ENCODE measurements at regions of chr18 and their contacts with region 1.

Region 1: DNA sequence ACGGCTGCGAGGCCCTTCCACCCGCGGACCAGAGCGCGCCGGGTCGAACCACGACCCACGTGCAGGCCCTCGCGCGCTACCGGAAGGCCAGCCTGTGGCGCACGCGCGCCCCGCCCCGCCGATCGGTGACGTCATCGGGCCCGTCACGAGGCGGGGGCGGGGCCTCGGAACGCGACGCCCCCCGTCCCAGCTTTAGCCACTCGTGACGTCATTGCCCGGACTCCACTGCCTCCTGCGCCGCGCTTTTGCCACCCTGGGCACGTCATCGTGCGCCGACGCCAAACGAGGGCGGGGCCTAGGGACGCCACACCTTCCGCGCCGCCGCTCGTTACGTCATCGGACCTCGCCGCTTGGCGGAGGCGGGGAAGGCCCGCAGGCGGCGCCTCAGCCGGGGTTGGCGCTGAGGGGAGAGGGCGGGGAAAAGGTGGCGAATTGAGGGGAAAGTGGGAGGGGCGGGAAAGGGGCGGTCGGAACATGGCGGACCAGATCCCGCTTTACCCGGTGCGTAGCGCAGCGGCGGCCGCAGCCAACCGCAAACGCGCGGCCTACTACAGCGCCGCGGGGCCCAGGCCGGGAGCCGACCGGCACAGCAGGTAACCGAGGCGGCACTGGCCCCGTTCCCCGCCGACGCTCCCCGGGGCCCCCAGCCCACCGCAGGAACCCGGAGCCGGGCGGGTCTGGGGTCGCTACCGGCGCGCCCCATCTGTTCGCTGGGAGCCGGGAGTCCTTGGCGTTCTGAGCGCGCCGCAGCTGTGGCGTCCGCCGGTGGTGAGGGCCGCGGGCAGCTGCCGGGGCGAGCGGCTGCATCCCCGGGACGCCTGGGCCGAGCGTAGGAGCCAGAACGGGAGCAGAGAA is at the start of gene ATP9B:
- DNase-seq: peak; percentile 98
- H3K4me3 Mint-ChIP-seq: peak within 1 kb of the TSS; percentile 91
- H3K27ac Mint-ChIP-seq: peak within 1 kb of the TSS; percentile 97
- H3K4me1 Mint-ChIP-seq: peaks cover 33% of the 10 kb centered on the region
- H3K27me3 Mint-ChIP-seq: peaks cover 3% of the 10 kb centered on the region
- total RNA-seq, gene ATP9B: 18.6 to 19.1 TPM

Region 2: DNA sequence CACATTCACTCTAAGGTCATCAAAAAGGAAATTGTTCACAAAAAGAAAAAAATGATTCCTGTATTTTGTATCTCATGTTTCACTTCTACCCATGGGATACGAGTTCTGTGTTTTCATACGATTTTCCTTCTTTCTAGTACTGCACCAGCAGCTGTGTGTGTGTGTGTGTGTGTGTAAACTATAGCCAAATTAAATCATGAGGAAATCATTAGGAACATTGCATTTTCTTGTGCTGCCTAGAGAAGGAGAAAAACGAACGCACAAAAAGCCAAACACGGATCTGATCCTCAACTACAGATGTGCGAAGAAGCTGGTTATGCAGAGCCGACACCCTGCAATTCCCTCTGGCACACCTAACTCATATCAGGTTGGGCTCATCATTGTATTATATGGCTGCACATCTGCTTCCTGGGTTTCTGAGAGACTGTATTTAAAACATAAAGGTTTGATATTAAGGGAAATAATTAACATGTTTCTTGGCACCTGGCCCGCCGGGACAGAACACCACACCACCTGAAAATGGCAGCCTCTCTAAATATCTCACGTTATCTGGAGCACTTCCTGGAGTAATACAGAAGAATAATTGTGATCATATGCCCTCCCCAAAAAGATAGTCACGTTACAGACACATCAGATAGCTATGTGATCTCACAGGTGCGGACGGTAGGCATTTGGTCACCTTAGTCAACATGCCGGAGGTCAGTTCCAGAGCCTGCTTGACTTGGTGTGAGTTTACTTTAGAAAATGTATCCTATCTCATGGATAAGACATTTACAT is 675.9 kb before region 1 on chr18:
- CTCF ChIA-PET with region 1: no interaction called
- intact Hi-C with region 1: no loop called
- DNase-seq: no peak
- H3K4me3 Mint-ChIP-seq: no peak overlapping the region
- H3K27ac Mint-ChIP-seq: no peak overlapping the region
- H3K4me1 Mint-ChIP-seq: no peaks in the 10 kb centered on the region
- H3K27me3 Mint-ChIP-seq: peaks cover 3% of the 10 kb centered on the region

Region 3: GRCh38 chr18:79200546-79201268 is 131.5 kb after region 1 on chr18:
- CTCF ChIA-PET with region 1: no interaction called
- intact Hi-C with region 1: loop called (anchors 5 kb)
- DNase-seq: no peak
- H3K4me3 Mint-ChIP-seq: no peak overlapping the region
- H3K27ac Mint-ChIP-seq: no peak overlapping the region
- H3K4me1 Mint-ChIP-seq: peaks cover 15% of the 10 kb centered on the region
- H3K27me3 Mint-ChIP-seq: no peaks in the 10 kb centered on the region

Region 4: GRCh38 chr18:79246348-79247108 is 177.4 kb after region 1 on chr18:
- CTCF ChIA-PET with region 1: no interaction called
- intact Hi-C with region 1: loop called (anchors 1 kb)
- DNase-seq: peak; percentile 84
- H3K4me3 Mint-ChIP-seq: no peak overlapping the region
- H3K27ac Mint-ChIP-seq: no peak overlapping the region
- H3K4me1 Mint-ChIP-seq: peaks cover 9% of the 10 kb centered on the region
- H3K27me3 Mint-ChIP-seq: no peaks in the 10 kb centered on the region

Region 5: GRCh38 chr18:79393635-79394533 is 324.7 kb after region 1 on chr18:
- CTCF ChIA-PET with region 1: no interaction called
- intact Hi-C with region 1: loop called (anchors 1 kb)
- DNase-seq: peak; percentile 73
- H3K4me3 Mint-ChIP-seq: peak overlapping the region; percentile 74
- H3K27ac Mint-ChIP-seq: peak overlapping the region; percentile 71
- H3K4me1 Mint-ChIP-seq: peaks cover 34% of the 10 kb centered on the region
- H3K27me3 Mint-ChIP-seq: peaks cover 5% of the 10 kb centered on the region

Region 6: DNA sequence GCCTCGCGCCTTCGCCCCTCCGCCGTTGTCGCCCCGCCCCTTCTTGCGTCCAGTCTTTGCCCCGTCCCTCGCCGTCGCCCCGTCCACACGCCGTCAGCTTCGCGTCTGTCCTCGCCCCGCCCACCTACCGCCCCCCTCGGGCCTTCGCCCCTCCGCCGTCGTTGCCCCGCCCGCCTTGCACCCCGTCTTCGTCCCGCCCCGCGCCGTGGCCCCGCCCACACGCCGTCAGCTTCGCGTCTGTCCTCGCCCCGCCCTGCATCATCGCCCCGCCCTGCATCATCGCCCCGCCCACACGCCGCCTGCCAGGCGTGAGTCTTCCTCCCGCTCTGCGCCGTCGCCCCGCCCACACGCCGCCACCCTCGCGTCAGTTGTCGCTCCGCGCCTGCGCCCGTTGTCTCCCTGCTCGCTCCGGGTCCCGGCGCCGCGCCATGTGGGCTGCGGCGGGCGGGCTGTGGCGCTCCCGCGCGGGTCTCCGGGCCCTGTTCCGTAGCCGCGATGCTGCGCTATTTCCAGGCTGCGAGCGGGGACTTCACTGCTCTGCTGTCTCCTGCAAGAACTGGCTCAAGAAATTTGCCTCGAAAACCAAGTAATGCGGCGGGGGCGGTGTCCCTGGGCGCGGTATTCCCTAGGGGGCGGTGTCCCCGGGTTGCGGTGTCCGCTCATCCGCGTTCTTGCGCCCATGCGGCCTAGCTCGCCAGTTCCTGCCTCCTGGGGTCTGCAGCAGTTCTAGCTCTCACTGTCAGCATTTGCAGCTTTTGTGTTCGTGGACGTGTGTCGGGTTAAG is 965.1 kb after region 1 on chr18 and contains the start of gene RBFA:
- CTCF ChIA-PET with region 1: no interaction called
- intact Hi-C with region 1: loop called (anchors 1 kb)
- DNase-seq: peak; percentile 100
- H3K4me3 Mint-ChIP-seq: peak within 1 kb of the TSS; percentile 82
- H3K27ac Mint-ChIP-seq: peak within 1 kb of the TSS; percentile 73
- H3K4me1 Mint-ChIP-seq: peaks cover 26% of the 10 kb centered on the region
- H3K27me3 Mint-ChIP-seq: no peaks in the 10 kb centered on the region
- total RNA-seq, gene RBFA: 35.7 to 36.0 TPM

Region 7: DNA sequence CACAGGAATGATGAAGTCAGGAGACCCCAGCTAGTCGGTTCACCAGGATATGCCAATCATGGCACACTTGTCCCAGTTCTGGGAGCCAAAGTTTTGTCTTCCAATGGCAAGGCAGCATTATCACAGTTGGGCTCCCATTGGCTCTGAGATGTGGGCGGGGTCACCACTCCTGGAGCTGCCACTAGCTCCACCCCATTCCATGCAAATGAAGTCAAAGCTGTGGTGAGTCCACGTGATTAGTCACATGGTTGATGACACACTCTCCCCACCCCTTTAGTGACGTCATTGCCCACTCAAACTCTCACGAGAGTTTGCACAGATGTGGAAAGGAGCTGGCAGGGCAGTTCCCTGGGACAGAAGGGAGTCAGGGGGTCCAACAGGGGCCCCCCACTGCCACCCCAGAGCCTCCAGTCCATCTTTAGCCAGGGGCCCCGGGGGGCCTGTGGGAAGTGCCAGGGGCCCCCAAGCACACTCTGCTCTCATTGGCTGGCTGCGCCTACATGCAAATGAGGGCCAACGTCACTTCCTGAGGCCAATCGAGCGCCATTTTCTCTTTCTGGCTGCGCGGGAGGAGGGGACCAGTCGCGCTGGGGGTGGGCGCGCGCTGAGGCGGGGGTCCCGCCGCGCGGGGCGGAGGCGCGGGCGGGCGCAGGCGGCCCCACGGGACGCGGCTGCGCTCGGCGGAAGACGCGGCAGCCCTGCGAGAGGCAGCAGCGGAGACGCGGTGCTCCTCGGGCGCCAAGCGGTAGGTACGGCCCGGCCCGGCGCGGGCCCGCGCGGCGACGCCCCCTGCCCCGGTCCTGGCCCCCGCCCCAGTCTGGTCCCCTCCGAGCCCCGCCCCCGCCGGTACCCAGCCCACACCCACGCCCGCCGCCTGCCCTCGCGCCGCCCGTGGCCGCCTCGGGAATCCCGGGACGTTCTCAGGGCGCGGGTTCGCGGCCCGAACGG is 1039.8 kb after region 1 on chr18 and contains the start of gene ADNP2:
- CTCF ChIA-PET with region 1: no interaction called
- intact Hi-C with region 1: loop called (anchors 10 kb)
- DNase-seq: peak; percentile 92
- H3K4me3 Mint-ChIP-seq: peak within 1 kb of the TSS; percentile 79
- H3K27ac Mint-ChIP-seq: peak within 1 kb of the TSS; percentile 80
- H3K4me1 Mint-ChIP-seq: peaks cover 32% of the 10 kb centered on the region
- H3K27me3 Mint-ChIP-seq: no peaks in the 10 kb centered on the region
- total RNA-seq, gene ADNP2: 16.8 to 18.0 TPM